Dorsolateral prefrontal cortex (tissue), 120 donors: ENCODE measurements at regions of chr11 and their contacts with region 1.

Region 1: DNA sequence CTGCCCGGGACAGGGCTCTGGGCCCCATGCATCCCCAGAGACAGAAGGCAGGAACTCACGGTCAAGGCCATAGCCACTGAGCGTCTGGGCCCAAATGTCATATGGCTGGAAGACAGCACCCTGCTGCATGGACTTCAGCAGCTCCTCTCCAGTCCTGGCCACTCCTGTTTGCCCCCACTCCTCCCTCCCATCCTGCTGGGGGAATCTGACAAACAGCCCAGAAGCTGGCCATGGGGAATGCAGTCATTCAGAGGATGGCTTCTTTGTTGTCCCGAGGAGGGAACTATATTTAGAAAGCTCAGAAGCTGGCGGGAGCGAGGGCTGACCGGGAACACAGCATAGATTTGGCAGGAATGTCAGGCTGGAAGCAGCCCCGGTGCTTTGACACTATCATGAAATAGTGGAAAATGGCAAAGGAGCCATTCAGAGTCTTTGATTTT is 35.0 kb downstream of the DKK3 start:
- DNase-seq: peak; percentile 44 to 91 (median 80)
- H3K4me3 ChIP-seq: peak overlapping the region in 6 of 59 donors; percentile 0 to 16 (median 6)
- H3K27ac ChIP-seq: peak overlapping the region; percentile 21 to 93 (median 84)
- H3K27me3 ChIP-seq: no peaks in the 10 kb centered on the region
- CTCF ChIP-seq: peak in 5 of 56 donors; percentile 9 to 24 (median 14)

Region 2: GRCh38 chr11:12019337-12019736 is 46.0 kb after region 1 on chr11:
- intact Hi-C with region 1: loop called in 1 of 2 experiments (anchors 2 kb)
- DNase-seq: peak in 3 of 10 donors; percentile 47 to 61 (median 54)
- H3K4me3 ChIP-seq: peak overlapping the region in 33 of 59 donors; percentile 1 to 51 (median 24)
- H3K27ac ChIP-seq: peak overlapping the region in 55 of 59 donors; percentile 2 to 85 (median 61)
- H3K27me3 ChIP-seq: no peaks in the 10 kb centered on the region
- CTCF ChIP-seq: peak in 2 of 56 donors; percentile 12 to 33